ENCODE measurements at regions of chr2 and their contacts with region 1.

Region 1: GRCh38 chr2:74935975-74936391 is 22.5 kb upstream of the POLE4 start:
- DNase-seq: no peak
- ATAC-seq: no peak
- H3K4me3 ChIP-seq: no peak overlapping the region
- H3K4me3 Mint-ChIP-seq: no peak overlapping the region
- H3K27ac ChIP-seq: no peak overlapping the region
- H3K27ac Mint-ChIP-seq: no peak overlapping the region
- H3K4me1 ChIP-seq: no peaks in the 10 kb centered on the region
- H3K4me1 Mint-ChIP-seq: no peaks in the 10 kb centered on the region
- H3K27me3 ChIP-seq: no peaks in the 10 kb centered on the region
- H3K27me3 Mint-ChIP-seq: peaks cover 12% of the 10 kb centered on the region
- CTCF ChIP-seq: no peak

Region 2: GRCh38 chr2:74982577-74982976 is 46.6 kb after region 1 on chr2:
- CTCF ChIA-PET with region 1: no interaction called
- POLR2A ChIA-PET with region 1: no interaction called
- intact Hi-C with region 1: loop called in 1 of 2 experiments (anchors 10 kb)
- DNase-seq: no peak
- ATAC-seq: no peak
- H3K4me3 ChIP-seq: no peak overlapping the region
- H3K4me3 Mint-ChIP-seq: no peak overlapping the region
- H3K27ac ChIP-seq: no peak overlapping the region
- H3K27ac Mint-ChIP-seq: no peak overlapping the region
- H3K4me1 ChIP-seq: no peaks in the 10 kb centered on the region
- H3K4me1 Mint-ChIP-seq: peaks cover 11% of the 10 kb centered on the region
- H3K27me3 ChIP-seq: no peaks in the 10 kb centered on the region
- H3K27me3 Mint-ChIP-seq: no peaks in the 10 kb centered on the region
- CTCF ChIP-seq: no peak

Region 3: GRCh38 chr2:75503048-75503607 is 567.1 kb after region 1 on chr2:
- CTCF ChIA-PET with region 1: no interaction called
- POLR2A ChIA-PET with region 1: no interaction called
- intact Hi-C with region 1: no loop called
- DNase-seq: no peak
- ATAC-seq: no peak
- H3K4me3 ChIP-seq: no peak overlapping the region
- H3K4me3 Mint-ChIP-seq: no peak overlapping the region
- H3K27ac ChIP-seq: no peak overlapping the region
- H3K27ac Mint-ChIP-seq: no peak overlapping the region
- H3K4me1 ChIP-seq: no peaks in the 10 kb centered on the region
- H3K4me1 Mint-ChIP-seq: no peaks in the 10 kb centered on the region
- H3K27me3 ChIP-seq: no peaks in the 10 kb centered on the region
- H3K27me3 Mint-ChIP-seq: peaks cover 3% of the 10 kb centered on the region
- CTCF ChIP-seq: no peak